ENCODE measurements at regions of chr4 and their contacts with region 1.

Region 1: GRCh38 chr4:181525634-181526033 is 717.6 kb upstream of the TENM3 start:
- DNase-seq: no peak
- ATAC-seq: no peak
- H3K4me3 ChIP-seq: no peak overlapping the region
- H3K4me3 Mint-ChIP-seq: no peak overlapping the region
- H3K27ac ChIP-seq: no peak overlapping the region
- H3K27ac Mint-ChIP-seq: no peak overlapping the region
- H3K4me1 ChIP-seq: no peaks in the 10 kb centered on the region
- H3K4me1 Mint-ChIP-seq: no peaks in the 10 kb centered on the region
- H3K27me3 ChIP-seq: no peaks in the 10 kb centered on the region
- H3K27me3 Mint-ChIP-seq: no peaks in the 10 kb centered on the region

Region 2: DNA sequence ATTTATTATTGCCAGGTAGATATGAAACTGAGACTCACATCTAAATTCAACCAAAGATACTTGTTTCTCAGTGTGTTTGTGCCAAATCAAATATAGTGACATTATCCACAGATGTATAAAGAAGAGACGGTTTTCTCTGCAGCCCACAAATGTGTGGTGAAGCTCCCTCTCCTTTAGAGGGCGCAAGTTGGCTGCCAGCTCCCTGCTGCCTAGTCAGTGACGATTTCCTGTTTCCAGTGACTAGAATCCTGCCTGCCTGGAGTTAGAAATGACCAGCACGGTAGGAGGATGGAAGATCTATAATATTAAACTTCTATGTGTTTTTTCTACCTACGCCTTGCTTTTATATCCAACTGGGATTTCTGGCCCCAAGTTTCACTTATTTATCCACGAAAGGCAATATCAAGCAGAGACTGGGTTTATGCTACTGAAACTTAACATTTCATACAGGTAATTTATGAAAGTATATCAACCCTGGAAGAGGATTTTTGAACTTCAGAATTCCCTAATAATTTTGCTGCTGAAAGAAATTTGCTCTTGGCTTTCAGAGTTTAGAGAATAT is 1076.2 kb before region 1 on chr4:
- CTCF ChIA-PET with region 1: no interaction called
- POLR2A ChIA-PET with region 1: no interaction called
- DNase-seq: no peak
- ATAC-seq: no peak
- H3K4me3 ChIP-seq: no peak overlapping the region
- H3K4me3 Mint-ChIP-seq: no peak overlapping the region
- H3K27ac ChIP-seq: no peak overlapping the region
- H3K27ac Mint-ChIP-seq: no peak overlapping the region
- H3K4me1 ChIP-seq: no peaks in the 10 kb centered on the region
- H3K4me1 Mint-ChIP-seq: no peaks in the 10 kb centered on the region
- H3K27me3 ChIP-seq: no peaks in the 10 kb centered on the region
- H3K27me3 Mint-ChIP-seq: no peaks in the 10 kb centered on the region

Region 3: DNA sequence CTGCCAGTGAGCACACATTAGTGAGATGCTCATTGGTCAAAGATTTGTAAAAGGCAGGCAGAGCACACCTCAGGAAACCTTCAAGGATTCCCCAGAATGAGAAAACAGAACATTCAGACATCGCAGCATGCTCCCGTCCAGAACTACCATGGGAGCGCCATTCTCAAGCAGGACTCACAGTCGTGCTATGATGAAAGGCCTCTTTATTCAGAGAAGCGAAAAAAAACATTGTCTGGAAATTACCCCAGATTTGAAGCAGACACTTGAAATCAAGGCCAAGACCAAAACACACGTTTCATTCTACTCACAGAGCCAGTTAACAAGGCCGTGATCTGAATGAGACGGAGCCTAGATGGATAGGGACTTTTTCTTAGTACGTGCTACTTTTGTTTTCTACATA is 244.2 kb before region 1 on chr4:
- CTCF ChIA-PET with region 1: no interaction called
- POLR2A ChIA-PET with region 1: no interaction called
- DNase-seq: no peak
- ATAC-seq: no peak
- H3K4me3 ChIP-seq: no peak overlapping the region
- H3K4me3 Mint-ChIP-seq: no peak overlapping the region
- H3K27ac ChIP-seq: no peak overlapping the region
- H3K27ac Mint-ChIP-seq: no peak overlapping the region
- H3K4me1 ChIP-seq: no peaks in the 10 kb centered on the region
- H3K4me1 Mint-ChIP-seq: no peaks in the 10 kb centered on the region
- H3K27me3 ChIP-seq: no peaks in the 10 kb centered on the region
- H3K27me3 Mint-ChIP-seq: no peaks in the 10 kb centered on the region

Region 4: DNA sequence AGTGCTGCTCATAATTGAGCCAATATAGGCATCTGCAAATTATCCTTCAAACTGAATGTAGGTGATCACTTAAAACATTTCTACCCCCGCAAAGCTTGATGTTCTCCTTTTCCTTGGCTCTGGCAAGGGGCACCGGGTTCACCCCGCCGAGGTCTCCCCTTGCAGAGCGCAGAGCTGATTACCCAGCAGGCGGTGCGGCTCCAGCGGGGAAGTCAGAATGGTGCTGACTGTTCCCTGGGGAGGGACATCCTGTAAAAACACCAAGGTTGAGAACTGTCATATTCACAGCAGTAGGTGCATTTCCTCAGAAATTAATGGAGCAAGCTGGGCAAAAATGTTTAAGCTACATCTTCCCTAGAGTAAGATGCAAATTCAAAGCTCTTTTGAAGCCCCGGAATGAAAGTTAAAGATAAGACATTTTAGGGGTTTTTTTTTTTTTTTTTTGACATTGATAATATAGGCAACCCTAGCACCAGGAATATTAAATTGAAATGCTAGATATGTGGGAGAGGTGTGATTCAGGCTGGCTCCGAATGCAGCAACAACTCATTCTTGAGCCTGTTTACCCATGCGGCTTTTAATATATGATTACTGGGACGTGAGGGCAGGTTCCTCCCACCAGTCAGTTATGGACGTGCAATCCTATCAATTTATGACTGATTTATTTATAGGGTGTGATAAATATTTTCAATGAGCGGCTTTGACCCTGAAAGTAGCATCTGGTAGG is 49.7 kb before region 1 on chr4:
- CTCF ChIA-PET with region 1: no interaction called
- POLR2A ChIA-PET with region 1: no interaction called
- DNase-seq: no peak
- ATAC-seq: no peak
- H3K4me3 ChIP-seq: no peak overlapping the region
- H3K4me3 Mint-ChIP-seq: no peak overlapping the region
- H3K27ac ChIP-seq: no peak overlapping the region
- H3K27ac Mint-ChIP-seq: no peak overlapping the region
- H3K4me1 ChIP-seq: no peaks in the 10 kb centered on the region
- H3K4me1 Mint-ChIP-seq: no peaks in the 10 kb centered on the region
- H3K27me3 ChIP-seq: no peaks in the 10 kb centered on the region
- H3K27me3 Mint-ChIP-seq: no peaks in the 10 kb centered on the region

Region 5: GRCh38 chr4:181507180-181507835 is 18.3 kb before region 1 on chr4:
- CTCF ChIA-PET with region 1: no interaction called
- POLR2A ChIA-PET with region 1: interaction called in 1 of 2 experiments, 17 read pairs
- DNase-seq: no peak
- ATAC-seq: no peak
- H3K4me3 ChIP-seq: no peak overlapping the region
- H3K4me3 Mint-ChIP-seq: no peak overlapping the region
- H3K27ac ChIP-seq: no peak overlapping the region
- H3K27ac Mint-ChIP-seq: no peak overlapping the region
- H3K4me1 ChIP-seq: no peaks in the 10 kb centered on the region
- H3K4me1 Mint-ChIP-seq: no peaks in the 10 kb centered on the region
- H3K27me3 ChIP-seq: no peaks in the 10 kb centered on the region
- H3K27me3 Mint-ChIP-seq: no peaks in the 10 kb centered on the region

Measured in T-cell (primary cell).